ENCODE measurements at regions of chr11 and their contacts with region 1.

Region 1: GRCh38 chr11:110195845-110196754 is 100.3 kb downstream of the RDX start:
- DNase-seq: no peak
- ATAC-seq: no peak
- H3K4me3 Mint-ChIP-seq: no peak overlapping the region
- H3K27ac Mint-ChIP-seq: no peak overlapping the region
- H3K4me1 Mint-ChIP-seq: peaks cover 10% of the 10 kb centered on the region
- H3K27me3 Mint-ChIP-seq: peaks cover 5% of the 10 kb centered on the region
- CTCF ChIP-seq: no peak

Region 2: GRCh38 chr11:110217223-110217877 is 21.2 kb after region 1 on chr11:
- CTCF ChIA-PET with region 1: interaction called, 10 read pairs
- POLR2A ChIA-PET with region 1: no interaction called
- intact Hi-C with region 1: no loop called
- DNase-seq: no peak
- ATAC-seq: no peak
- H3K4me3 Mint-ChIP-seq: no peak overlapping the region
- H3K27ac Mint-ChIP-seq: no peak overlapping the region
- H3K4me1 Mint-ChIP-seq: no peaks in the 10 kb centered on the region
- H3K27me3 Mint-ChIP-seq: no peaks in the 10 kb centered on the region
- CTCF ChIP-seq: no peak

Region 3: DNA sequence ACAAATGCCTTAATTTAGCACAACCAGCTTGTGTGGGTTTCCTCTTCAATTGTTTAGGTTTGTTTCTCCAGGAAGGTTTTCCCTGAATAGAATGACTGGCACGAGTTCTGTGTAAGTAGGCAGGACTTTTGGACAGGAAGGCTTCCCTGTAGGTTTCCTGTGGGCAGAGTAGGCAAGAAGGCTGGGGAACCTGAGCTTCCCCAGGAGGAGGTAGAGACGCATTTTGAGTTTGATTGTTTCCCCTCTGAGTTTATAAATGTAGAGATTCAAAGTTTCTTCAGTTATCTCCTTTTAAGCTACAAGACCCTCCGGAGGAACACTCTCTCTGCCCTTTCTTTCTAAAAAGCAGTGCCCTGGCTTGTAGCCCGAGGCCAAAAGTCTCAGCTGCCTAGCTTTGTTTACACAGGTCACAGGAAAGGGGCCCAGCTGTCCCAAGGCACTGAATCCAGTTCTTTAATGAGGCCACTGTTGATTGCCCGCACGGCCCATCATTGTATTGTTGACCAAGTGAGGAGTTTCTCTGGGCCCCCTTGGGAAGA is 166.9 kb after region 1 on chr11:
- CTCF ChIA-PET with region 1: interaction called, 43 read pairs
- POLR2A ChIA-PET with region 1: interaction called, 3 read pairs
- intact Hi-C with region 1: loop called (anchors 2 kb)
- DNase-seq: no peak
- ATAC-seq: no peak
- H3K4me3 Mint-ChIP-seq: no peak overlapping the region
- H3K27ac Mint-ChIP-seq: no peak overlapping the region
- H3K4me1 Mint-ChIP-seq: peaks cover 10% of the 10 kb centered on the region
- H3K27me3 Mint-ChIP-seq: no peaks in the 10 kb centered on the region
- CTCF ChIP-seq: no peak

Region 4: DNA sequence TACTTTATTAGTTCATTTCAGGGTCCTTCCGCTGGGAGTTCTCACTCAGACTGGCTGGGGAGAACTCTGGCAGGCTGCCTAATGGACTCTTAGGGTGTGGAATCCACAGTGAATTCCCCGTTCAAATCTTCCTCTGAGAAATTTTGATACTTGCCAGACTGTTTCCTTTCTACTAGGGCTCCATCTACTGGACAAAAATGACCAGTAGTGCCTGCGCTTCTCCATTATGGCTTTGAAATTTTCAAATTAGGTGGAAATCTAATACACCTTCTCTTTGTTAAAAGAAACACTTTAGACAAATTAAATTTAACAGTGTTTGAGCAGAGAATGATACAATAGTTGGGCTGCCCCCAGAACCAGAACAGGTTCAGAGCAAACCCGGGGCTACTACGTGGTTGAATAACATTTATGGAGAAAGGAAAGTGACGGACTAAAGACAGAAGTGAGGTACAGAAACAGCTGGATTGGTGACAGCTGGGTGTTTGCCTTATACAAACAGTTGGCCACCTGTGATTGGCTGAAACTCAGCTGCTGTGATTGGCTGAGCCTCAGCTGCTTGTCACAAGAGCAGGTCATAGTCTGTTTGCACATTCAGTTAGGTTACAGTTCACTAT is 180.7 kb after region 1 on chr11:
- CTCF ChIA-PET with region 1: interaction called, 69 read pairs
- POLR2A ChIA-PET with region 1: no interaction called
- intact Hi-C with region 1: loop called (anchors 1 kb)
- DNase-seq: peak; percentile 38
- ATAC-seq: peak; percentile 29
- H3K4me3 Mint-ChIP-seq: no peak overlapping the region
- H3K27ac Mint-ChIP-seq: no peak overlapping the region
- H3K4me1 Mint-ChIP-seq: peaks cover 16% of the 10 kb centered on the region
- H3K27me3 Mint-ChIP-seq: peaks cover 7% of the 10 kb centered on the region
- CTCF ChIP-seq: peak; percentile 90

Region 5: DNA sequence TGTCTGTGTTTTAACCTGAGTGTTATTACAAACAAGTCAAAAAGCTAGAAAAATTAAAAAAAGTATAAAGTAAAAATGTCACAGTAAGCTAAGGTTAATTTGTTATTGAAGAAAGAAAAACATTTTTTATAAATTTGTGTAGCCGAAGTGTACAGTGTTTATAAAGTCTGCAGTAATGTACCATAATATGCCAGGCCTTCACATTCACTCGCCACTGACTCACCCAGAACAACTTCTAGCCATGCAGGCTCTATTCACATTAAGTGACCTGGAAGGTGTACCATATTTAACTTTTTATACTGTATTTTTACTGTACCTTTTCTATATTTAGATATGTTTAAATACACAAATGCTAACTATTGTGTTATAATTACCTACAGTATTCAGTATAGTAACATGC is 219.0 kb after region 1 on chr11:
- CTCF ChIA-PET with region 1: interaction called, 17 read pairs
- POLR2A ChIA-PET with region 1: no interaction called
- intact Hi-C with region 1: no loop called
- DNase-seq: no peak
- ATAC-seq: no peak
- H3K4me3 Mint-ChIP-seq: no peak overlapping the region
- H3K27ac Mint-ChIP-seq: no peak overlapping the region
- H3K4me1 Mint-ChIP-seq: no peaks in the 10 kb centered on the region
- H3K27me3 Mint-ChIP-seq: peaks cover 2% of the 10 kb centered on the region
- CTCF ChIP-seq: no peak

Region 6: GRCh38 chr11:110429731-110430266 is 233.7 kb after region 1 on chr11 and contains the start of gene FDX1:
- CTCF ChIA-PET with region 1: interaction called, 126 read pairs
- POLR2A ChIA-PET with region 1: no interaction called
- intact Hi-C with region 1: loop called (anchors 2 kb)
- DNase-seq: peak; percentile 93
- ATAC-seq: peak; percentile 88
- H3K4me3 Mint-ChIP-seq: peak within 1 kb of the TSS; percentile 100
- H3K27ac Mint-ChIP-seq: peak within 1 kb of the TSS; percentile 96
- H3K4me1 Mint-ChIP-seq: peaks cover 39% of the 10 kb centered on the region
- H3K27me3 Mint-ChIP-seq: no peaks in the 10 kb centered on the region
- CTCF ChIP-seq: peak; percentile 47
- total RNA-seq, gene FDX1: 16.9 to 17.2 TPM